Gastrocnemius medialis (tissue), 4 donors: ENCODE measurements at regions of chr20 and their contacts with region 1.

Region 1: GRCh38 chr20:17995967-17996819 is 27.4 kb downstream of the MGME1 start:
- DNase-seq: peak in 1 of 2 donors; percentile 18
- ATAC-seq: peak; percentile 61 to 72
- H3K4me3 ChIP-seq: peak overlapping the region in 1 of 4 donors; percentile 13
- H3K27ac ChIP-seq: no peak overlapping the region
- H3K4me1 ChIP-seq: peaks cover 0 to 4% of the 10 kb centered on the region in 2 donors
- H3K27me3 ChIP-seq: no peaks in the 10 kb centered on the region
- CTCF ChIP-seq: peak; percentile 86 to 99 (median 98)
- POLR2A ChIP-seq: no peak

Region 2: GRCh38 chr20:17485017-17485416 is 511.2 kb before region 1 on chr20:
- in situ Hi-C with region 1: no loop called
- intact Hi-C with region 1: no loop called
- DNase-seq: no peak
- ATAC-seq: no peak
- H3K4me3 ChIP-seq: no peak overlapping the region
- H3K27ac ChIP-seq: no peak overlapping the region
- H3K4me1 ChIP-seq: no peaks in the 10 kb centered on the region
- H3K27me3 ChIP-seq: peaks cover 0 to 4% (median 0%) of the 10 kb centered on the region in 3 donors
- CTCF ChIP-seq: no peak
- POLR2A ChIP-seq: no peak

Region 3: GRCh38 chr20:17958373-17959256 is 37.6 kb before region 1 on chr20:
- in situ Hi-C with region 1: loop called in 1 of 4 experiments (anchors 5 kb)
- intact Hi-C with region 1: loop called (anchors 2 kb)
- DNase-seq: no peak
- ATAC-seq: peak in 1 of 2 donors; percentile 38
- H3K4me3 ChIP-seq: no peak overlapping the region
- H3K27ac ChIP-seq: peak overlapping the region; percentile 22 to 98 (median 45)
- H3K4me1 ChIP-seq: peaks cover 63 to 65% of the 10 kb centered on the region in 2 donors
- H3K27me3 ChIP-seq: no peaks in the 10 kb centered on the region
- CTCF ChIP-seq: peak in 2 of 5 experiments; percentile 28 to 35
- POLR2A ChIP-seq: no peak

Region 4: GRCh38 chr20:18101125-18101810 is 105.1 kb after region 1 on chr20:
- in situ Hi-C with region 1: no loop called
- intact Hi-C with region 1: no loop called
- DNase-seq: no peak
- ATAC-seq: no peak
- H3K4me3 ChIP-seq: no peak overlapping the region
- H3K27ac ChIP-seq: no peak overlapping the region
- H3K4me1 ChIP-seq: no peaks in the 10 kb centered on the region
- H3K27me3 ChIP-seq: no peaks in the 10 kb centered on the region
- CTCF ChIP-seq: no peak
- POLR2A ChIP-seq: no peak

Region 5: GRCh38 chr20:18252597-18253451 is 256.6 kb after region 1 on chr20:
- in situ Hi-C with region 1: no loop called
- intact Hi-C with region 1: no loop called
- DNase-seq: no peak
- ATAC-seq: no peak
- H3K4me3 ChIP-seq: no peak overlapping the region
- H3K27ac ChIP-seq: no peak overlapping the region
- H3K4me1 ChIP-seq: no peaks in the 10 kb centered on the region
- H3K27me3 ChIP-seq: no peaks in the 10 kb centered on the region
- CTCF ChIP-seq: no peak
- POLR2A ChIP-seq: no peak